ENCODE measurements at regions of chr4 and their contacts with region 1.

Region 1: DNA sequence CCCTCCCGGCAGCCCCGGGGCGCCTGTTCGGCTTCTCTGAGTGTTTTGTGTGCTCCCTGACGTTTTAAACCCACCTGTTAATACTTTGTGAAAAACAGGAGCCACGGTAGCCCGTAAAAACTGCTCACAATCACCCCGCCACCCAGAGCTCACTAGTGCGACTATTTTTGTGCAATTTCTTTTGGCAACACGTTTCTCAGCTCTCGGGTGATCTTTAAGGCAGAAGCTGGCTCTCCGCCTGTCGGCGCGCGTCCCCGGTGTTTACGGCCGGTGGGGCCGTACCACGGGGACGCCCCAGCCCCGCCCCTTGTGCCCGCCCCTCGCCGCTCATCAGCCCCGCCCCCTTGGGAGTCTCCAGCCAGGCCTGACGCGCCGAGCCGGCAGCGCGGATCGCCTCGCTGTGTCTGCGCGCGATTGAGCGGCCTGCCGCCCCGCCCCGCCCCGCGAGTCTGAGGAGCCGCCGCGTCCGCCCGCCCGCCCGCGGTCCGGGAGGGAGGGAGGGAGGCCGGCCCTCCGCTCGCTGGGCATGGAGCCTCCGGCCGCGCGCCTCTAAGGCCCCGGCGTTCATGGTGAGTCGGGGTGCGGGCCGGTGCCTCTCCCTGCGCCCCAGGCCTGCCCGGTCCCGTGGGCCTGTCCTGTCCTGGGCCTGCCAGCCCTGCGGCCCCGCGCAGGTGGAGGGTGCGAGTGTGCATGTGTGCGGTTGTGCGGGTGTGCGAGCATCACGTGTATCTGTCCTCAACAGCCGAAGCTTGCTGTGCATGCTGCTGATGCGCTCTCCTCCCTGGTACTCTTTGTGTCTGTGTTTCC is 56.2 kb upstream of the TADA2B start:
- DNase-seq: peak; percentile 98
- ATAC-seq: peak; percentile 97

Region 2: GRCh38 chr4:6783053-6783981 is 203.7 kb before region 1 on chr4:
- intact Hi-C with region 1: loop called (anchors 5 kb)
- DNase-seq: peak; percentile 95
- ATAC-seq: peak; percentile 88

Region 3: DNA sequence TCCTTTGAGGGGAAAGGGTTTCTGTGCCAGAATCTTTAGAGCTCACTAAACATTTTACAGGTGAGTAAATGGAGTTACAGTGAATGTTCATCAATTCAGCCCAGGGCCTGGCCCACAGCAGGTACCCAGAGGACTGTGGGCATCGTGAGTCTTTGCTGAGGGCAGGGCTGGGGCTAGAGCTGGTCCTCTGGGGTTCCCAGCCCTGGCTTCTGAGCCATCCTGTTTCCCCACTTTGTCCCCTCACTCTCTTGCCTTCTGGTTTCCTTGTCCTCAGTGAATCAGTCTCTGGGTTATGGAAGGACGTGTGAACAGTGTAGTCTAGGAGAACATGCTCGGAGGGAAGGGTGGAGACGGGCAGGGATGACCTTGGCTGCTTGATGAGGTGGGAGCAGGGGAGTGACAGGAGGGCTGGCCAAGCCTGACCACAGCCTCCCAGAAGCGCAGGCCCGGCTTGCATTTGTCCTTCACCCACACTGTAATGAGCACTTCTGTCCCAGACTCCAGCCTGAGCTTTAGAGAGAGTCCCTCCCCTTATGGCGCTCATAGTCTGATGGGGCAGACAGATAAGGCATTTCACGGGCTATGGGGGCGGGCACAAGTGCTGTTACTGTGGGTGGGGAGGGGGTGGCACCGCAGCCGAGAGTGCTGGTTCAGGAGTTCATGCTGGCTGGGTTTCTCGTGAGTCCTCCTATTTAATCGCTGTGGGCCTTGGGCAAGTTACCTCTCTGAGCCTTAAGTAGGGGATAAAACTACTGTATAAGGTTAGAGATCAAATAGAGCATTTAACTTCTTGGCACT is 60.1 kb before region 1 on chr4:
- intact Hi-C with region 1: loop called (anchors 5 kb)
- DNase-seq: peak; percentile 77
- ATAC-seq: peak; percentile 9

Region 4: DNA sequence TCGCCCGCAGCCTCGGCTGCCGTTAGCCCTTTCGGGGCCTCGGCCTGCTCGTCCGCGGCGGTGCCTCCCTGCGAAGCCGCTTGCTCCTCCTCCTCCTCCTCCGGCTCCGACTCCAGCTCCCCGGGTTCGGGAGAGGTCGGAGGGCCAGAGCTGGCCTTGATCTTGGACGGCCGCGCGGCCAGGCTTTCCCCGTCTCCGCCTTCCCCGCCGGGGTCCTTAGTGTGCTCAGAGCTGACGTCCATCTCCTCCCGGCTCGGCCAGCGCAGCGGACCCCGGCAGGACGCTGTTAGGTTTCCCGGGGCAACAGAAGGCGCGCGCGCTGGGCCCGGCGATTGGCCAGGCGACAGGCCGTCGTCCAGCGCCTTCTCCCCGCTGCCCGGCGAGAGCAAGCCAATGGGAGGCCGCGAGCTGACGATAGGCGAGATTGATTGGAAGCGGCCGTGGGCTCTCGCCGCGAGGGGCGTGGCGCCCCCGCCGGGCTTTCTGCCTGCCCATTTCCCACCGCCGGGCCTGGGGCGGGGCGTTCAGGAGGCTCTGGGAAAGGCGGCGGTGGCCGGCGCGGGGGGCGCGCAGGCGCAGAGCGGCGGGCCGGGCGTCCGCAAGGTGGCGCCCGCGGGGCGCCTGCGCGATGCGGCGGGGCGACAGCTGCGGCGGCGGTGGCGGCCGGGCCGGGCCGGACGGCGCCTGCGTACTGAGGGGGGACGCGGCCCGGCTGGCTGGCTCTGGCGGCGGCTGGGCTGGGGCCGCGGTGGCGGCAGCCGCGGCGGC is 55.9 kb after region 1 on chr4 and contains the start of gene TADA2B:
- intact Hi-C with region 1: loop called (anchors 1 kb)
- DNase-seq: peak; percentile 99
- ATAC-seq: peak; percentile 97
- total RNA-seq, gene TADA2B: 33.3 TPM

Region 5: GRCh38 chr4:7089213-7089986 is 102.4 kb after region 1 on chr4:
- intact Hi-C with region 1: no loop called
- DNase-seq: no peak
- ATAC-seq: no peak

Region 6: GRCh38 chr4:7381221-7381889 is 394.4 kb after region 1 on chr4:
- intact Hi-C with region 1: no loop called
- DNase-seq: peak; percentile 52
- ATAC-seq: peak; percentile 55

Measured in Right ventricle myocardium inferior (tissue), 1 donor.